ENCODE measurements at regions of chr1 and their contacts with region 1.

Region 1: DNA sequence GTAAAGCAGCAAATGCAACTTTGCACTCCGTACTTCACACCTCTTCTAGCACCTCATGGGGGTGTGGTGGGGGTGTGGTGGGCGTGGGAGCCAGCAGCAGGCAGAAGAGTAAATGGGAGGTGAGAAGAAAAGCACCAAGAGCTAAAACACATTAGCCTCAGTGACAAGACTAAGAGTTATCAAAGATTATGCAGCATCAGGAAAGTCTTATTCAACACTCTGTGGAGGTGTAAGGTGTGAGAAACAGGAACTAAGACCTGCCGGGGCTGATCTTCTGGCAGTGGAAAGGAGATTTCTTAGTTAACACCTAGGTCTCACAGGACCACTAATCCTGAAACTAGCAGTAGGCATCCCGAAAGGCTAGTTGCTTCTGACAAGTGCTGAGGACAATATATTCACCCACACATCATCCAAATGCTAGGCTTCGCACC is 9.9 kb downstream of the TGFBR3 start:
- DNase-seq: peak; percentile 68
- ATAC-seq: peak; percentile 83
- H3K4me3 Mint-ChIP-seq: no peak overlapping the region
- H3K27ac Mint-ChIP-seq: peak overlapping the region; percentile 29
- H3K4me1 Mint-ChIP-seq: peaks cover 79% of the 10 kb centered on the region
- H3K27me3 Mint-ChIP-seq: no peaks in the 10 kb centered on the region

Region 2: GRCh38 chr1:91673613-91674012 is 202.4 kb before region 1 on chr1:
- CTCF ChIA-PET with region 1: no interaction called
- POLR2A ChIA-PET with region 1: no interaction called
- intact Hi-C with region 1: loop called (anchors 1 kb)
- DNase-seq: no peak
- ATAC-seq: no peak
- H3K4me3 Mint-ChIP-seq: no peak overlapping the region
- H3K27ac Mint-ChIP-seq: peak overlapping the region; percentile 84
- H3K4me1 Mint-ChIP-seq: peaks cover 34% of the 10 kb centered on the region
- H3K27me3 Mint-ChIP-seq: no peaks in the 10 kb centered on the region

Region 3: GRCh38 chr1:91732291-91733107 is 143.6 kb before region 1 on chr1:
- CTCF ChIA-PET with region 1: no interaction called
- POLR2A ChIA-PET with region 1: no interaction called
- intact Hi-C with region 1: loop called (anchors 1 to 2 kb)
- DNase-seq: peak; percentile 58
- ATAC-seq: peak; percentile 47
- H3K4me3 Mint-ChIP-seq: no peak overlapping the region
- H3K27ac Mint-ChIP-seq: peak overlapping the region; percentile 89
- H3K4me1 Mint-ChIP-seq: peaks cover 48% of the 10 kb centered on the region
- H3K27me3 Mint-ChIP-seq: peaks cover 5% of the 10 kb centered on the region

Region 4: GRCh38 chr1:91803847-91804545 is 72.1 kb before region 1 on chr1:
- CTCF ChIA-PET with region 1: no interaction called
- POLR2A ChIA-PET with region 1: interaction called, 3 read pairs
- intact Hi-C with region 1: loop called (anchors 1 kb)
- DNase-seq: peak; percentile 86
- ATAC-seq: peak; percentile 80
- H3K4me3 Mint-ChIP-seq: peak overlapping the region; percentile 56
- H3K27ac Mint-ChIP-seq: peak overlapping the region; percentile 90
- H3K4me1 Mint-ChIP-seq: peaks cover 39% of the 10 kb centered on the region
- H3K27me3 Mint-ChIP-seq: peaks cover 1% of the 10 kb centered on the region

Region 5: DNA sequence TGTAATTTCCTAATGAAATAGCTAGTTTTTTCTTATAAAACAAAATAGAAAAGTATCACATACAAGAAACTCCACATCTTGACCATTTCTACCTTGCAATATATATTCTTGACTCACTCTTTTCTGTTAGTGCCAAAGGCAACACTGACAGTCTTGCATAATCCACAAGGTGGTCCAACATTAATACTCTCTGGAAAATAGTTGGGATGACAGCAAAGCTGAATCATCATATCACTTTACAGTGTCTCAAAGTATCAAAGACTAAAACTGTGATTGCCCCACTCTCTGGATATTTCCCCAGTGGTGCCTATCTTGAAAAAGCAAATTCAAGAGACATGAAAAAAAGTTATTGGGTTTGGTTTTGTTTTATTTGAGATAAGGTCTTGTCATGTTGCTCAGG is 24.5 kb after region 1 on chr1:
- CTCF ChIA-PET with region 1: no interaction called
- POLR2A ChIA-PET with region 1: no interaction called
- intact Hi-C with region 1: no loop called
- DNase-seq: no peak
- ATAC-seq: no peak
- H3K4me3 Mint-ChIP-seq: no peak overlapping the region
- H3K27ac Mint-ChIP-seq: no peak overlapping the region
- H3K4me1 Mint-ChIP-seq: peaks cover 4% of the 10 kb centered on the region
- H3K27me3 Mint-ChIP-seq: peaks cover 7% of the 10 kb centered on the region

Region 6: GRCh38 chr1:92583821-92584760 is 708.0 kb after region 1 on chr1:
- CTCF ChIA-PET with region 1: no interaction called
- POLR2A ChIA-PET with region 1: no interaction called
- intact Hi-C with region 1: loop called in 1 of 2 experiments (anchors 2 kb)
- DNase-seq: no peak
- ATAC-seq: peak; percentile 60
- H3K4me3 Mint-ChIP-seq: peak overlapping the region; percentile 68
- H3K27ac Mint-ChIP-seq: peak overlapping the region; percentile 92
- H3K4me1 Mint-ChIP-seq: peaks cover 79% of the 10 kb centered on the region
- H3K27me3 Mint-ChIP-seq: no peaks in the 10 kb centered on the region

Measured in activated CD4-positive, alpha-beta T cell treated with anti-CD3 and anti-CD28 coated beads for 36 hours (primary cell).